ENCODE measurements at regions of chr17 and their contacts with region 1.

Region 1: GRCh38 chr17:28951991-28952975 is 965 bp upstream of the PHF12 start:
- DNase-seq: peak; percentile 100
- ATAC-seq: peak; percentile 82
- H3K4me3 ChIP-seq: peak overlapping the region; percentile 83
- H3K27ac ChIP-seq: peak overlapping the region; percentile 74
- H3K4me1 ChIP-seq: peaks cover 4% of the 10 kb centered on the region
- H3K27me3 ChIP-seq: no peaks in the 10 kb centered on the region
- CTCF ChIP-seq: no peak
- EP300 ChIP-seq: peak in 1 of 2 experiments; percentile 31; a peak in 1 of 4 replicates
- POLR2A ChIP-seq: peak; percentile 85
- RAD21 ChIP-seq: no peak

Region 2: DNA sequence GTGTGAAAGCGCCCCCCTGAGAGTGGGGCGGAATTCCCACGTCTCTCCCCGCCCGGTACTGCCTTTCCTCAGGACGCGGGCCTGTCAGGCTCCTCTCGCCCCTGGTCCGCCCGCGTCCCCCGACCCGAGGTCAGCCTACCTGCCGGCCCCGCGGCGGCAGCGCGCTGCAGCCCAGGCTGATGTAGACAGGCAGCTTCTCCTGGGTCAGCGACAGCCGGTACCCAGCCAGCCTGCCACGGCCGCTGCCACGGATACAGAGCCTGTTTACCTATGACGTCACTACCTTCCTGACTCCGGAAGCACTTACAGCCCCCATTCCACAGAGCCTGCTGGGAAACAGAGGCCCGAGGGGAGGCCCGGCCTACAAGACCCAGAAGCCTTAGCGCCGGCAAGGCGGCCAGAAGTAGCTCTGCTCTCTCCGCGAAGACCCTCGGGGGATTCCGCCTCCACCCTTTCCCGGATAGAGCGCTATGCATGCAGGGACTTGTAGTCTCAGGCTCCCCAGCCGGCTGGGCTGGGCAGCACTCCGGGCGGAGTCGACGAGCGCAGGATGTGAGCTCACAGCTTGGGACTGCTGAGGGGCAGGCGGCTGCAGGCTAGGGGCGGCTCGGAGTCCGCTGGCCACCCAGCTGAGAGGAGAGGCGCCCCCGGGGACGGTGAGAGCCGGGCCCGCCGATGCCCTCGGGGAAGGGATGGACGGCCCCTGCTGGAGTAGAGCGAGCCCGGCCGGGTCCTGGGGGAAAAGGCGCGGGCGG is 616.9 kb before region 1 on chr17 and contains the starts of genes IFT20 and TNFAIP1:
- CTCF ChIA-PET with region 1: no interaction called
- POLR2A ChIA-PET with region 1: no interaction called
- RAD21 ChIA-PET with region 1: no interaction called
- SMC1A ChIA-PET with region 1: no interaction called
- in situ Hi-C with region 1: loop called (anchors 10 kb)
- intact Hi-C with region 1: no loop called
- DNase-seq: peak; percentile 98
- ATAC-seq: peak; percentile 98
- H3K4me3 ChIP-seq: peak within 1 kb of the TSS; percentile 88
- H3K27ac ChIP-seq: peak within 1 kb of the TSS; percentile 36
- H3K4me1 ChIP-seq: peaks cover 3% of the 10 kb centered on the region
- H3K27me3 ChIP-seq: no peaks in the 10 kb centered on the region
- CTCF ChIP-seq: no peak
- EP300 ChIP-seq: 0 out of 4 replicates have a peak, but pooled peaks of 1 of the 2 experiments have one; percentile 34
- POLR2A ChIP-seq: peak; percentile 93
- RAD21 ChIP-seq: no peak
- polyA plus RNA-seq, gene IFT20: 9.4 to 13.1 TPM
- polyA plus RNA-seq, gene TNFAIP1: 1.8 to 3.9 TPM

Region 3: DNA sequence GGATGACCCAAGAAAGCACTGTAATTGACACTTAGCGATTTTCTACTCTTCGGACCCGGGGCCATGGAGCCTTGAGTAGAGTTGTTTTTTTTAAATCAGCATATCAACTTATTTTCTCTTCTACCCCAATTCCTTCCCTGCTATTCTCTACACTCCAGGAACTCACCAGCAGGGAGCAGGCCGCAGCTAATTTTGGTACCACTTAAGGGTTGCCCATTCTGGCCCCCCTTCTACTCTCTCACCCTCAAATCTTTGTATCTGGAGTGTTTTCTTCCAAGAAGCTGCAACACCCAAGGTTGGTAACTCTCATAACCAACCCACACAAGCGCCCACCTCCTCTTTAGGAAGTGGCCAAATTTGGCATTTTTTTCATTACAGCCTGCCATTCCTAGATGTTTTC is 103.0 kb before region 1 on chr17:
- CTCF ChIA-PET with region 1: interaction called, 12 read pairs
- POLR2A ChIA-PET with region 1: interaction called, 5 read pairs
- RAD21 ChIA-PET with region 1: interaction called, 3 read pairs
- SMC1A ChIA-PET with region 1: interaction called, 5 read pairs
- in situ Hi-C with region 1: no loop called
- intact Hi-C with region 1: no loop called
- DNase-seq: no peak
- ATAC-seq: peak; percentile 91
- H3K4me3 ChIP-seq: no peak overlapping the region
- H3K27ac ChIP-seq: no peak overlapping the region
- H3K4me1 ChIP-seq: peaks cover 3% of the 10 kb centered on the region
- H3K27me3 ChIP-seq: no peaks in the 10 kb centered on the region
- CTCF ChIP-seq: peak; percentile 7 to 57 (median 19); a peak in 3 of 6 replicates
- EP300 ChIP-seq: no peak
- POLR2A ChIP-seq: no peak
- RAD21 ChIP-seq: peak; percentile 53

Region 4: DNA sequence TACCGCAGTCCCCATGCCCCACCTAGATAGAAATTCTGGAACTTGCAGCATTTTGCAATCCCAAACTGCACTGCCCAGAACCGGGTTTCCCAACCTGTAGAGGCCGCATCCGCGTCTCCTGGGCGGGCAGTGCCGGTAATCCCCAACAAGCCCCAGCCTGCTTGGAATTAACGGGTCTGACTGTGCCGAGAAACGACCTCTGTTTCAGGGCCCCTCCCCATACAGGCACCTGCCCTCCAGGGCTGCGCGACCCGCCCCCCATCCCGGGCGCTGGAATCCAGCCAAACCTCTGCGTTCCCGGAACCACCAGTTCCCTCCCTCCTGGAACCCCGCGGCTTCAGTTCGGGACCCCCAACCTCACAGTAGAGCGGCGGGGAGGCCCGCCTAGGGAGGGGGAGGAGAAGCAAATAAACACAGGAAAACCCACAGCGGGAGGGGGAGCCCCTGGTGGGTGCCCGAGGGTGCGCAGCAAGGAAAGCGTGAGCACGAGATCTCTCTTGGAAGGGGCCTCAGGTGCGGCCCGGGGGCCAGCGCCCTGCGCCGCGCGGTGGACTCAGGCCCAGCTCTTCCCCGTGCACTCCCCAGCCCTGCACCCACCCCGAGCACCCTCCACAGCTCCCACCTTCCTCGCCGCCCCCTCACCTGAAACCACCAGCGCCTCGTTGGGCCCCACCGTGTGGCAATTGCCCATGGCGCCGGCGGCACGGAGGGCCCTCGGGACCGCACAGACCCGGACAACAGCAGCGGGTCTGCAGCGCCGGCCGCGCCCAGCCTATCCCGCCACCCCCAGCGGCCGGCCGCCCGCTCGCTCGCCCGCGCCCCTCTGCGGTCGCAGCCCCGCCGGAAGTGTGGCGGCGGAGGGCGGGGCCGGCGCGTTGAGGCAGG is 55.2 kb before region 1 on chr17 and contains the start of gene FLOT2:
- CTCF ChIA-PET with region 1: interaction called, 18 read pairs
- POLR2A ChIA-PET with region 1: interaction called, 24 read pairs
- RAD21 ChIA-PET with region 1: interaction called, 21 read pairs
- SMC1A ChIA-PET with region 1: interaction called, 8 read pairs
- in situ Hi-C with region 1: no loop called
- intact Hi-C with region 1: loop called (anchors 2 kb)
- DNase-seq: no peak
- ATAC-seq: peak; percentile 43
- H3K4me3 ChIP-seq: peak within 1 kb of the TSS; percentile 92
- H3K27ac ChIP-seq: peak within 1 kb of the TSS; percentile 72
- H3K4me1 ChIP-seq: peaks cover 39% of the 10 kb centered on the region
- H3K27me3 ChIP-seq: no peaks in the 10 kb centered on the region
- CTCF ChIP-seq: peak in 2 of 3 experiments; percentile 11 to 17; a peak in 2 of 6 replicates
- EP300 ChIP-seq: no peak
- POLR2A ChIP-seq: peak; percentile 71
- RAD21 ChIP-seq: no peak
- polyA plus RNA-seq, gene FLOT2: 56.8 to 121 TPM

Region 5: GRCh38 chr17:28925912-28926365 is 26.3 kb before region 1 on chr17:
- CTCF ChIA-PET with region 1: interaction called, 10 read pairs
- POLR2A ChIA-PET with region 1: interaction called, 5 read pairs
- RAD21 ChIA-PET with region 1: interaction called, 4 read pairs
- SMC1A ChIA-PET with region 1: interaction called, 6 read pairs
- in situ Hi-C with region 1: no loop called
- intact Hi-C with region 1: no loop called
- DNase-seq: peak; percentile 47
- ATAC-seq: peak; percentile 75
- H3K4me3 ChIP-seq: no peak overlapping the region
- H3K27ac ChIP-seq: no peak overlapping the region
- H3K4me1 ChIP-seq: peaks cover 12% of the 10 kb centered on the region
- H3K27me3 ChIP-seq: no peaks in the 10 kb centered on the region
- CTCF ChIP-seq: no peak
- EP300 ChIP-seq: no peak
- POLR2A ChIP-seq: no peak
- RAD21 ChIP-seq: no peak

Region 6: GRCh38 chr17:28967221-28968140 is 15.2 kb after region 1 on chr17:
- CTCF ChIA-PET with region 1: interaction called, 52 read pairs
- POLR2A ChIA-PET with region 1: no interaction called
- RAD21 ChIA-PET with region 1: interaction called, 7 read pairs
- SMC1A ChIA-PET with region 1: interaction called, 12 read pairs
- in situ Hi-C with region 1: no loop called
- intact Hi-C with region 1: no loop called
- DNase-seq: no peak
- ATAC-seq: peak; percentile 59
- H3K4me3 ChIP-seq: no peak overlapping the region
- H3K27ac ChIP-seq: no peak overlapping the region
- H3K4me1 ChIP-seq: peaks cover 3% of the 10 kb centered on the region; the same call in 1 of the 2 replicates
- H3K27me3 ChIP-seq: peaks cover 0 to 2% of the 10 kb centered on the region in 2 experiments; a peak in 1 of 4 replicates
- CTCF ChIP-seq: no peak
- EP300 ChIP-seq: no peak
- POLR2A ChIP-seq: no peak
- RAD21 ChIP-seq: no peak

Region 7: GRCh38 chr17:29116804-29117772 is 164.8 kb after region 1 on chr17:
- CTCF ChIA-PET with region 1: interaction called, 18 read pairs
- POLR2A ChIA-PET with region 1: no interaction called
- RAD21 ChIA-PET with region 1: interaction called, 6 read pairs
- SMC1A ChIA-PET with region 1: interaction called, 3 read pairs
- in situ Hi-C with region 1: no loop called
- intact Hi-C with region 1: no loop called
- DNase-seq: peak; percentile 5
- ATAC-seq: peak; percentile 89
- H3K4me3 ChIP-seq: no peak overlapping the region
- H3K27ac ChIP-seq: no peak overlapping the region
- H3K4me1 ChIP-seq: no peaks in the 10 kb centered on the region
- H3K27me3 ChIP-seq: no peaks in the 10 kb centered on the region
- CTCF ChIP-seq: peak; percentile 90 to 95 (median 92)
- EP300 ChIP-seq: no peak
- POLR2A ChIP-seq: no peak
- RAD21 ChIP-seq: peak; percentile 70